Psoas muscle (tissue), 8 donors: ENCODE measurements at regions of chr20 and their contacts with region 1.

Region 1: DNA sequence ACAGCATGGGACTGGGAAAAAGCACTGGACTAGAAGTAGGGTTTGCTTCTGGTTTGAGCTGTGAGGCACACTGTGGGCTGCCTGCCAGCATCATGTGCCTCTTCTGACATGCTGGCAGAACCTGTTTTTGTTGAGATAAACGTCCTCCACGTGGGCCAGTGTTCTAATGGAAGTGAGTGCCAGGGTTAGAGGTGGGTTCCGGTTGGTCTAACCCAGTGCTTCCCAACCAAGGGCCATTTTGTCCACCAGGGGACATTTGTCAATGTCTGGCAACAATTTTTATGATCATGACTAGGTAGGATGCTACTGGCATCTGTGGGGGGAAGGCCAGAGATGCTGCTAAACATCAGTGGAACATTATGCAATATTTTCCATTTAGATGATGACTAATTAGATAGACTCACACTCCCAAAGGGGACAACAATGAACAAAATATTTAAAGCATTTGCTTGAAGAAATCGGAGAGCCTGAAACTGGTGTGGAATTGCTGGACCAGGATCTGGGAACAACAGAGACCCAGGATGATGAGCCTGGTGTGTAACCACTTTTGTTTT is 7.8 kb upstream of the APMAP start:
- DNase-seq: peak; percentile 75 to 80
- ATAC-seq: peak; percentile 77 to 88 (median 87)
- H3K4me3 ChIP-seq: no peak overlapping the region
- H3K27ac ChIP-seq: peak overlapping the region; percentile 54
- H3K4me1 ChIP-seq: peaks cover 23% of the 10 kb centered on the region
- H3K27me3 ChIP-seq: no peaks in the 10 kb centered on the region
- CTCF ChIP-seq: peak; percentile 22

Region 2: DNA sequence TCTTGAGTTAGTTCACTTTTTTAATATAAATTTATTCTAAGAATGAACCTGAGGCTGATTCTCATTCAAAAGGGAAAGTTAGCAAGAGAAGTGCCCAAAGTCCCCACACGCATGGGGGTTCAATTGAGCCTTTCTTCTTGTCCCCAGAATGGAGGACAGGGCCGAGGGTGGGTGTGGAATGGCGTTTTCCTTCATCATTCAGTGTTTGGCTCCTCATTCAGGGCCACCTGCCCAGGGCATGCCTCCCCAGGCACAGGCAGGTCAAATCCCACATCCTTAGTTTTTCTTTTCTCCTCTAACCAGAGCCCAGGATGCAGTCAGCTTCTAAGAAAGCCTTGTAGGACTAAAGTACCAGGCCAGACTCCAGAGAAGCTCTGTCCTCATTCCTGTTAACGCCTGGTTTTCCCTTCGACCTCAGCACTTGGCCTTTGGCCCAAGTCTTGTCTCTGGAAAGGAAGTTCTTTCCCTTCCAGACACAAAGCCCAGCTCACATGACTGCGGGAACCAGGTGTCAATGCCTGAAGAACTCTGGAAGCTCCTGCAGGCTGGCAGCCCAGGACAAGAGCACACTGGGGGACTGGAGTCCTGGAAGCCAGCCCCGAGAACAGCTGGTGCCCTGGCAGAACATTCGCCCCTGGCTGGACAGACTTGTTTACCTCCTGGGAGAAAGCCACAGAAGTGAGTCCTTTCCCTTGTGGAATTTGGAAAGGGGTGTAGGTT is 39.2 kb after region 1 on chr20:
- intact Hi-C with region 1: loop called (anchors 5 kb)
- DNase-seq: peak; percentile 92 to 97
- ATAC-seq: peak; percentile 89 to 93 (median 90)
- H3K4me3 ChIP-seq: peak overlapping the region; percentile 19
- H3K27ac ChIP-seq: peak overlapping the region; percentile 89
- H3K4me1 ChIP-seq: peaks cover 86% of the 10 kb centered on the region
- H3K27me3 ChIP-seq: no peaks in the 10 kb centered on the region
- CTCF ChIP-seq: no peak